Activated CD8-positive, alpha-beta T cell treated with anti-CD3 and anti-CD28 coated beads, Interleukin-2, amount 10 ng/mL, durations not matched to agents 7 days and 5 days (primary cell): ENCODE measurements at regions of chr17 and their contacts with region 1.

Region 1: DNA sequence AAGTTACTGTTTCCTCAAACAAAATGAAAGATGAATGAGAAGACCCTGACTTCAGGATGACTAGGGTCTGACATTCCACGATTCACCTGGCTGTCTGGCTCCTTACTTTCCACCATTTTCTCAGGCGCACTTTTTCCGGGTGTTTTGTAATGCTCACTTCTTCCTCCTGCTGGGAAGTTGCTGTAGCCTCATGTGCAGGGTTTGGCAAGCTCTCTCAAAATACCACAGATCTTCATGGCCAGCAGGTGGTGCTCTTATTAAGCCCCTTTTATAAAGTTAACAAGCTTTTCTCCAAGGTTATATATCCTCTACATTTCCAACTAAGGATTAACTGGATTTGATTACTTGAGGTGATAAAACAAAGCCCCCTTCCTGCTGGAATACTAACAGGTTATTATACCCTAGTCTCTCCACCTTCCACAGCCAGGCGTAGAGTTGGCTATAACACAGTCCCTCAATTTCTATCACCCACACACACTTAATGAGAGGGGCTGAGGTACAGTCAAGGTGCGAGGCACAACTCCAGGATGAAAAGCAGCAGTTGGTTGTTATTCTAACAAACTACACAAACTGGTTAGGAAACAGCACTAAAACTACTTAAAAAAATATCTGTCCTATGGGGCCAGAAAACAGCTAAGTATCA is 45.4 kb downstream of the STH start:
- DNase-seq: peak; percentile 65
- ATAC-seq: peak; percentile 57
- H3K4me3 Mint-ChIP-seq: no peak overlapping the region
- H3K27ac Mint-ChIP-seq: no peak overlapping the region
- H3K4me1 Mint-ChIP-seq: peaks cover 6% of the 10 kb centered on the region
- H3K27me3 Mint-ChIP-seq: no peaks in the 10 kb centered on the region

Region 2: DNA sequence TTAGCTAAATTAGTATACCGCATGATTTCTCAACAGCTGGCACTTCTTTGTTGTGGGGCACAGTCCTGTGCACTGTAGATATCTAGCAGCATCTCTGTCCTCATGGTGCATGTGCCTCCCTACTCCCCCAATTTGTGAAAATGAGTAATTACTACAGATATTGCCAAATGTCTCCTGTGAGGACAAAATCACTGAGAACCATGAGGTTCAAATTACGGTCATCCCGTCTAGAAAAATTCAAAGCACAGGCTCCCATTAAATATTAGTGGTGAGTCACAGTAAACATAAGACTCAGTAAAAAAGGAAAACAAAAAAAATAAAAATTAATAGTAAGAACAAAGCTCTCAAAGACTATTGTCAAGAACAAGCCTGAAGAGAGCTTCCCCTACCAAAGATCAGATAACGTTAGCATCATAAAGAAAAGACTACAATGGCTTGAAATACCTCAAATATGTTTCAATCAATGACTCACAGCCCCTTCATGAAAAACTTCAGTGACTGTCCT is 12.4 kb after region 1 on chr17:
- CTCF ChIA-PET with region 1: interaction called, 31 read pairs
- POLR2A ChIA-PET with region 1: no interaction called
- DNase-seq: no peak
- ATAC-seq: no peak
- H3K4me3 Mint-ChIP-seq: no peak overlapping the region
- H3K27ac Mint-ChIP-seq: no peak overlapping the region
- H3K4me1 Mint-ChIP-seq: peaks cover 16% of the 10 kb centered on the region
- H3K27me3 Mint-ChIP-seq: no peaks in the 10 kb centered on the region

Region 3: GRCh38 chr17:46071796-46072195 is 27.4 kb after region 1 on chr17:
- CTCF ChIA-PET with region 1: interaction called, 10 read pairs
- POLR2A ChIA-PET with region 1: no interaction called
- DNase-seq: no peak
- ATAC-seq: no peak
- H3K4me3 Mint-ChIP-seq: no peak overlapping the region
- H3K27ac Mint-ChIP-seq: no peak overlapping the region
- H3K4me1 Mint-ChIP-seq: no peaks in the 10 kb centered on the region
- H3K27me3 Mint-ChIP-seq: no peaks in the 10 kb centered on the region

Region 4: DNA sequence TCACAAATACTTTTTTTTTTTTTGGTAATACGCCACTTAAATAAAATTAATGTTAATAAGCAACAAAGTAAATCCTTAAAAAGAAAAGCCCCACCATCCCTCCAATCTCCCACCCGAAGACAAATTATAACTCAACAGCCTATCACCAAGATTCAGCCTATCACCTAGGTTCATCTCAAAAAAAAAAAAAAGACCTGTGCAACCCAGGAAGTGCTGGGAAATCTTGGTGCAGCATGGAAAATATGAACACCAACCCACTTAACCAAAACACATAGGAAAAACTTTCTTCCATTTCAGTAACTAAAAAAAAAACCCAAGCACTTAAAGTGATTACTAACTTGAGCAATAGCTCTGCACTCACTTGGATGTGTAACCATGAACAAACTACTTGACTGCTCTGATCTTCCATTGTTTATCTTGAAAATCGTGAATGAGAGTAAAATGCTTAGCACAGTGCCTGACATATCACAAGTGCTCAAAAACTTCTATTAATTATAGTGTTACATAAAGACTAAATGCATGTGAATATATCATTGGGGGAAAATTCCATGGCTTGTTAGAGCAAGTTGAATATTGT is 45.1 kb after region 1 on chr17:
- CTCF ChIA-PET with region 1: interaction called, 13 read pairs
- POLR2A ChIA-PET with region 1: no interaction called
- DNase-seq: no peak
- ATAC-seq: no peak
- H3K4me3 Mint-ChIP-seq: no peak overlapping the region
- H3K27ac Mint-ChIP-seq: no peak overlapping the region
- H3K4me1 Mint-ChIP-seq: peaks cover 2% of the 10 kb centered on the region
- H3K27me3 Mint-ChIP-seq: no peaks in the 10 kb centered on the region

Region 5: GRCh38 chr17:46144246-46144645 is 99.8 kb after region 1 on chr17:
- CTCF ChIA-PET with region 1: interaction called, 11 read pairs
- POLR2A ChIA-PET with region 1: no interaction called
- DNase-seq: no peak
- ATAC-seq: no peak
- H3K4me3 Mint-ChIP-seq: no peak overlapping the region
- H3K27ac Mint-ChIP-seq: no peak overlapping the region
- H3K4me1 Mint-ChIP-seq: peaks cover 68% of the 10 kb centered on the region
- H3K27me3 Mint-ChIP-seq: no peaks in the 10 kb centered on the region

Region 6: GRCh38 chr17:46179375-46179999 is 135.1 kb after region 1 on chr17:
- CTCF ChIA-PET with region 1: interaction called, 69 read pairs
- POLR2A ChIA-PET with region 1: no interaction called
- DNase-seq: no peak
- ATAC-seq: peak; percentile 76
- H3K4me3 Mint-ChIP-seq: peak overlapping the region; percentile 57
- H3K27ac Mint-ChIP-seq: peak overlapping the region; percentile 74
- H3K4me1 Mint-ChIP-seq: peaks cover 65% of the 10 kb centered on the region
- H3K27me3 Mint-ChIP-seq: no peaks in the 10 kb centered on the region

Region 7: GRCh38 chr17:46193626-46194392 is 149.4 kb after region 1 on chr17:
- CTCF ChIA-PET with region 1: interaction called, 11 read pairs
- POLR2A ChIA-PET with region 1: interaction called, 6 read pairs
- DNase-seq: peak; percentile 95
- ATAC-seq: peak; percentile 85
- H3K4me3 Mint-ChIP-seq: peak overlapping the region; percentile 84
- H3K27ac Mint-ChIP-seq: peak overlapping the region; percentile 99
- H3K4me1 Mint-ChIP-seq: peaks cover 62% of the 10 kb centered on the region
- H3K27me3 Mint-ChIP-seq: no peaks in the 10 kb centered on the region